Calu3 (cell line): ENCODE measurements at regions of chr16 and their contacts with region 1.

Region 1: GRCh38 chr16:48054881-48055601 is 100.8 kb downstream of the ABCC12 start:
- DNase-seq: peak; percentile 52
- H3K4me3 Mint-ChIP-seq: no peak overlapping the region
- H3K27ac Mint-ChIP-seq: no peak overlapping the region
- H3K4me1 Mint-ChIP-seq: no peaks in the 10 kb centered on the region
- H3K27me3 Mint-ChIP-seq: peaks cover 74% of the 10 kb centered on the region
- CTCF ChIP-seq: peak; percentile 81

Region 2: DNA sequence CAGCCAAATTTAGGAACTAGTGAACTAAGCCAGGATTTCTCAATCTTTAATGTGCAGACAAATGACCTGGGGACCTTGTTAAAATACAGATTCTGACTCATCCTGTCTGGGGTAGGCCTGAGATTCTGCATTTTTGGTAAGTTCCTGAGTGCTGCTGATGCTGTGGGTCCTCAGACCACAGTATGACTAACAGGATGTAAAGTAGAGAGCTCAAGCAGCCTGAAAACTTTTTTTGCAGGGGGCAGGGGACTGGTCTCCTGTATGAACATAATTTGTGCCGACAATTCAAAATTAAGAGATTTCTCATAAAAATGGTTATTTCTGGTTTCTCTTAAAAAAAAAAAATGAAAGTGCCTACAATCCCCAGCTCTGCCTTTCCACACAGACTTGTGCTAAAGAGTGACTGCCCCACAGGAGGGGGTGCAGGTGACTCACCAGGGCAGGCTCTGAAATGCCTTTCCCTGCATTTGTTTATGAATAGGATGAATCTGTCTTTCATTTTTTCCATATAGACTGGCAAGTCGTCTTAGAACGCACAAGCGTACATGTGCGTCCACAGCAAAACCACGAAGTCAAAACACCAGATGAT is 322.4 kb before region 1 on chr16:
- CTCF ChIA-PET with region 1: interaction called, 4 read pairs
- intact Hi-C with region 1: loop called (anchors 10 kb)
- DNase-seq: no peak
- H3K4me3 Mint-ChIP-seq: no peak overlapping the region
- H3K27ac Mint-ChIP-seq: no peak overlapping the region
- H3K4me1 Mint-ChIP-seq: no peaks in the 10 kb centered on the region
- H3K27me3 Mint-ChIP-seq: peaks cover 39% of the 10 kb centered on the region
- CTCF ChIP-seq: no peak

Region 3: DNA sequence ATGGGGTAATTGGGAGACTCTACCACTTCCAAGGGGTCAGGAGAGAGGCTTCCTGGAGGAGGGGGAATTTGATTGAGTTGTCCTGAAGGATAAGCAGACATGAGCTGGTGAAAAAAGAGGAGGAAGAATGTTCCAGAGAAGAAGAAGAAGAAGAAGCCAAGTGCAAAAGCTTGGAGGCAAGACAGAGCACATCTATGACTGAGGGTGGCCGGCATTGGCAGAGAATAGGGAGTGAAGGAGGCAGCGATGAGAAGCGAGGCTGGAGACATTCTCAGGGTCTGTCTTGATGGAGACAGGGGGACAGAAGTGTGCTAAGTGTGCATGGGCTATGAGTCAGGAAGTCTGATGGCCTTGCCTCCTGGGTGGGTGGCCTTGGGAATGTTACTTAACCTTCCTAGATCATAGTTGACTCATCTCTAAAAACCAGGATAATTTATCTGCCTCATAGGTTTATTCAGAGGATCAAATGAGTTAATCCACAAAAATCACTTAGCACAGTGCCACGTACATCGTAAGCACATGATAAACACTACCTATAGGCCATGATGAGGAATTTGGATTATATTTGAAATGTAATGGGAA is 71.0 kb before region 1 on chr16:
- CTCF ChIA-PET with region 1: no interaction called
- intact Hi-C with region 1: no loop called
- DNase-seq: no peak
- H3K4me3 Mint-ChIP-seq: no peak overlapping the region
- H3K27ac Mint-ChIP-seq: no peak overlapping the region
- H3K4me1 Mint-ChIP-seq: no peaks in the 10 kb centered on the region
- H3K27me3 Mint-ChIP-seq: peaks cover 66% of the 10 kb centered on the region
- CTCF ChIP-seq: no peak